Breast epithelium (tissue), 4 donors: ENCODE measurements at regions of chr18 and their contacts with region 1.

Region 1: GRCh38 chr18:48771641-48772375 is 179.0 kb downstream of the SMAD7 start:
- DNase-seq: peak in 1 of 2 donors; percentile 63
- H3K4me3 ChIP-seq: no peak overlapping the region
- H3K27ac ChIP-seq: peak overlapping the region; percentile 58 to 80
- H3K4me1 ChIP-seq: no peaks in the 10 kb centered on the region
- H3K27me3 ChIP-seq: no peaks in the 10 kb centered on the region
- CTCF ChIP-seq: no peak
- POLR2A ChIP-seq: no peak

Region 2: DNA sequence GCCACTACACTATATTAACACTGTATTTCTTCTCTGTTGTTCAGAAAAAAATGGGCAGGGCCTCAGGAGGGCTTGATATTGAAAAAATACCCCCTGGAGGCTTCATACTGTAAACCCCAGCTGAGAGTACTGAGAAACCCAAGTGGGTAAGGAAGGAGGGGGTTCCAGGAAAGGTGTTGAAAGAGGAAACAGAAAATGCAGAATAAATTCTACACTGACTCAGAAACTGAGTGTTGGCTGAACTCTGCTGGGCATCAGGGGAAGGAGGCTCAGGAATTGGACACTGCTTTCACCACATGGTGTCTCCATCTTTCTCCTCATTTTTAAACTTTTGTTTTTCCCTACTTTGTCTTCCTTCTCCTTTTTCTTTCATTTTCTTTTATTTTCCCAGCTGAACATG is 434.9 kb after region 1 on chr18:
- intact Hi-C with region 1: loop called (anchors 5 kb)
- DNase-seq: no peak
- H3K4me3 ChIP-seq: no peak overlapping the region
- H3K27ac ChIP-seq: no peak overlapping the region
- H3K4me1 ChIP-seq: no peaks in the 10 kb centered on the region
- H3K27me3 ChIP-seq: no peaks in the 10 kb centered on the region
- CTCF ChIP-seq: no peak
- POLR2A ChIP-seq: no peak